GM12878 (cell line): ENCODE measurements at regions of chr3 and their contacts with region 1.

Region 1: GRCh38 chr3:69306239-69307185 is 79.4 kb downstream of the FRMD4B start:
- DNase-seq: no peak
- ATAC-seq: peak; percentile 98
- H3K4me3 ChIP-seq: no peak overlapping the region
- H3K27ac ChIP-seq: no peak overlapping the region
- H3K4me1 ChIP-seq: no peaks in the 10 kb centered on the region
- H3K27me3 ChIP-seq: no peaks in the 10 kb centered on the region
- CTCF ChIP-seq: peak; percentile 91 to 96 (median 94)
- EP300 ChIP-seq: no peak
- POLR2A ChIP-seq: no peak
- RAD21 ChIP-seq: peak; percentile 98

Region 2: GRCh38 chr3:69174871-69175737 is 131.4 kb before region 1 on chr3:
- CTCF ChIA-PET with region 1: interaction called, 49 read pairs
- POLR2A ChIA-PET with region 1: no interaction called
- RAD21 ChIA-PET with region 1: interaction called, 28 read pairs
- SMC1A ChIA-PET with region 1: interaction called, 22 read pairs
- in situ Hi-C with region 1: no loop called
- intact Hi-C with region 1: no loop called
- DNase-seq: no peak
- ATAC-seq: no peak
- H3K4me3 ChIP-seq: no peak overlapping the region
- H3K27ac ChIP-seq: no peak overlapping the region
- H3K4me1 ChIP-seq: no peaks in the 10 kb centered on the region
- H3K27me3 ChIP-seq: no peaks in the 10 kb centered on the region
- CTCF ChIP-seq: no peak
- EP300 ChIP-seq: no peak
- POLR2A ChIP-seq: no peak
- RAD21 ChIP-seq: no peak

Region 3: GRCh38 chr3:69212411-69213139 is 93.9 kb before region 1 on chr3:
- CTCF ChIA-PET with region 1: interaction called, 5 read pairs
- POLR2A ChIA-PET with region 1: interaction called, 3 read pairs
- RAD21 ChIA-PET with region 1: interaction called, 12 read pairs
- SMC1A ChIA-PET with region 1: interaction called, 18 read pairs
- in situ Hi-C with region 1: no loop called
- intact Hi-C with region 1: no loop called
- DNase-seq: no peak
- ATAC-seq: peak; percentile 92
- H3K4me3 ChIP-seq: no peak overlapping the region
- H3K27ac ChIP-seq: no peak overlapping the region
- H3K4me1 ChIP-seq: no peaks in the 10 kb centered on the region
- H3K27me3 ChIP-seq: no peaks in the 10 kb centered on the region
- CTCF ChIP-seq: no peak
- EP300 ChIP-seq: peak; percentile 24 to 27; a peak in 1 of 4 replicates
- POLR2A ChIP-seq: no peak
- RAD21 ChIP-seq: no peak

Region 4: GRCh38 chr3:69255928-69256327 is 50.6 kb before region 1 on chr3:
- CTCF ChIA-PET with region 1: interaction called, 10 read pairs
- POLR2A ChIA-PET with region 1: no interaction called
- RAD21 ChIA-PET with region 1: no interaction called
- SMC1A ChIA-PET with region 1: interaction called, 13 read pairs
- in situ Hi-C with region 1: no loop called
- intact Hi-C with region 1: no loop called
- DNase-seq: no peak
- ATAC-seq: no peak
- H3K4me3 ChIP-seq: no peak overlapping the region
- H3K27ac ChIP-seq: no peak overlapping the region
- H3K4me1 ChIP-seq: no peaks in the 10 kb centered on the region
- H3K27me3 ChIP-seq: no peaks in the 10 kb centered on the region; a peak in 2 of 4 replicates
- CTCF ChIP-seq: no peak
- EP300 ChIP-seq: no peak
- POLR2A ChIP-seq: no peak
- RAD21 ChIP-seq: no peak

Region 5: GRCh38 chr3:69318410-69318809 is 11.9 kb after region 1 on chr3:
- CTCF ChIA-PET with region 1: interaction called, 236 read pairs
- POLR2A ChIA-PET with region 1: interaction called, 4 read pairs
- RAD21 ChIA-PET with region 1: interaction called, 19 read pairs
- SMC1A ChIA-PET with region 1: interaction called, 67 read pairs
- in situ Hi-C with region 1: no loop called
- intact Hi-C with region 1: no loop called
- DNase-seq: no peak
- ATAC-seq: no peak
- H3K4me3 ChIP-seq: no peak overlapping the region
- H3K27ac ChIP-seq: no peak overlapping the region
- H3K4me1 ChIP-seq: peaks cover 7% of the 10 kb centered on the region; the same call in 1 of the 2 replicates
- H3K27me3 ChIP-seq: no peaks in the 10 kb centered on the region
- CTCF ChIP-seq: no peak
- EP300 ChIP-seq: no peak
- POLR2A ChIP-seq: no peak
- RAD21 ChIP-seq: no peak

Region 6: DNA sequence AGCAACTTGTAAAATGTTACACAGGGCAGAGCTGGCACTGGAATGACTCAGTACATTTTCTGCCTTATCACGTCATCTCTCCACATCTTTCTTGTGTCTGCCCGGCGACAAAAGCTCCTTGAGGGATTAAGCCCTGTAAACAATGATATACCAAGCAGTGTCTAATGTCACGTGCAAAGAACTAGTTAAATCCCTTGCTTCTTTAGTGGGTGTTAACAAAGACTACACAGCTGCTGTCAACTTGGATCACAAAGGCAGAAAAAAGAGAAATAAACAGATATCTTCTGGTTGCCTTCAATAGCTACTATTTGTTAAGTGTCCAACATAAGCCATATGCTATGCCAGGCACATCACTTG is 127.4 kb after region 1 on chr3:
- CTCF ChIA-PET with region 1: interaction called, 11 read pairs
- POLR2A ChIA-PET with region 1: no interaction called
- RAD21 ChIA-PET with region 1: interaction called, 5 read pairs
- SMC1A ChIA-PET with region 1: interaction called, 4 read pairs
- in situ Hi-C with region 1: no loop called
- intact Hi-C with region 1: loop called (anchors 5 kb)
- DNase-seq: no peak
- ATAC-seq: peak; percentile 70
- H3K4me3 ChIP-seq: no peak overlapping the region
- H3K27ac ChIP-seq: no peak overlapping the region
- H3K4me1 ChIP-seq: peaks cover 9% of the 10 kb centered on the region
- H3K27me3 ChIP-seq: no peaks in the 10 kb centered on the region; a peak in 1 of 4 replicates
- CTCF ChIP-seq: no peak
- EP300 ChIP-seq: no peak
- POLR2A ChIP-seq: no peak
- RAD21 ChIP-seq: no peak